Stomach (tissue), 19 donors: ENCODE measurements at regions of chr7 and their contacts with region 1.

Region 1: GRCh38 chr7:28921822-28922221 is 36.3 kb downstream of the TRIL start:
- DNase-seq: peak; percentile 52 to 87
- H3K4me3 ChIP-seq: no peak overlapping the region
- H3K27ac ChIP-seq: no peak overlapping the region
- H3K4me1 ChIP-seq: peaks cover 0 to 19% (median 17%) of the 10 kb centered on the region in 4 donors
- H3K27me3 ChIP-seq: peaks cover 0 to 12% (median 0%) of the 10 kb centered on the region in 3 donors
- CTCF ChIP-seq: peak in 5 of 7 experiments; percentile 79 to 93 (median 90)
- EP300 ChIP-seq: no peak
- POLR2A ChIP-seq: no peak

Region 2: GRCh38 chr7:28708033-28708951 is 213.5 kb before region 1 on chr7:
- intact Hi-C with region 1: no loop called
- DNase-seq: peak in 1 of 2 donors; percentile 60
- H3K4me3 ChIP-seq: peak overlapping the region in 1 of 4 donors; percentile 3
- H3K27ac ChIP-seq: peak overlapping the region in 1 of 5 donors; percentile 44
- H3K4me1 ChIP-seq: peaks cover 0 to 7% (median 0%) of the 10 kb centered on the region in 4 donors
- H3K27me3 ChIP-seq: no peaks in the 10 kb centered on the region
- CTCF ChIP-seq: no peak
- EP300 ChIP-seq: no peak
- POLR2A ChIP-seq: no peak

Region 3: DNA sequence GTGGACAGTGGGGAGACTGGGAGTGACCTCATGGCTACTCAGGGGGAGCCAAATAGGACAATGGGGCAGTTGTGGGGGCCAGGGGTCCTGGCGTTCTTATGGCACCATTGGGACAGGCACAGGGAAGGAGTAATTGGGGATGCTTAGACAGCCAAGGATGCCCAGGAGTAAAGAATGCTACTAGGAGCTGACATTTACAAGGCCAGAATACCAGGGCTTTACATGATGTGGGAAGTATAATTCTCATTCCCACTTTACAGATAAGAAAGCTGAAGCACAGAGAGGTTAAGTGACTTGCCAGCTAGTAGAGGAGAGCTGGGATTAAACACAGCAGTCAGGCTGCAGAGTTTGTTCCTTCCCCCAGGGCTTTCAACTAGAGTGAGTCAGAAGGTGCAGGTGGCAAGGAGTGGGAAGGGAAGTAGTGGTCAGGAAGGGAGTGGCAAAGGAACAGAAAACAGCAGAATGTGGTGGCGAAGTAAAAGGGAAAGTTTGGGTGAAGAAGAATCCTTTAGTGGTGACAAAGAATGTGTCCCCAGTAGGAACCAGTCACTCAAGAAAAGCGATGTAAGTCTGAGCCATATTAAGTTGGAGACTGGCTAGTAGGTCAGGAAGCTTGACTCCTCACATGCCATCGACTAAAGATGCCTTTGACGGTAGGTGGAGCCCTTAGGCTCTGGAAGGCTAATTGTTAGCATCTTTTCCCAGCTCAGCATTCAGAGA is 191.7 kb after region 1 on chr7:
- intact Hi-C with region 1: loop called (anchors 2 kb)
- DNase-seq: peak in 1 of 2 donors; percentile 60
- H3K4me3 ChIP-seq: no peak overlapping the region
- H3K27ac ChIP-seq: no peak overlapping the region
- H3K4me1 ChIP-seq: peaks cover 3 to 30% (median 13%) of the 10 kb centered on the region in 4 donors
- H3K27me3 ChIP-seq: peaks cover 0 to 11% (median 0%) of the 10 kb centered on the region in 3 donors
- CTCF ChIP-seq: peak in 1 of 7 experiments; percentile 7
- EP300 ChIP-seq: no peak
- POLR2A ChIP-seq: no peak